ENCODE measurements at regions of chr4 and their contacts with region 1.

Region 1: DNA sequence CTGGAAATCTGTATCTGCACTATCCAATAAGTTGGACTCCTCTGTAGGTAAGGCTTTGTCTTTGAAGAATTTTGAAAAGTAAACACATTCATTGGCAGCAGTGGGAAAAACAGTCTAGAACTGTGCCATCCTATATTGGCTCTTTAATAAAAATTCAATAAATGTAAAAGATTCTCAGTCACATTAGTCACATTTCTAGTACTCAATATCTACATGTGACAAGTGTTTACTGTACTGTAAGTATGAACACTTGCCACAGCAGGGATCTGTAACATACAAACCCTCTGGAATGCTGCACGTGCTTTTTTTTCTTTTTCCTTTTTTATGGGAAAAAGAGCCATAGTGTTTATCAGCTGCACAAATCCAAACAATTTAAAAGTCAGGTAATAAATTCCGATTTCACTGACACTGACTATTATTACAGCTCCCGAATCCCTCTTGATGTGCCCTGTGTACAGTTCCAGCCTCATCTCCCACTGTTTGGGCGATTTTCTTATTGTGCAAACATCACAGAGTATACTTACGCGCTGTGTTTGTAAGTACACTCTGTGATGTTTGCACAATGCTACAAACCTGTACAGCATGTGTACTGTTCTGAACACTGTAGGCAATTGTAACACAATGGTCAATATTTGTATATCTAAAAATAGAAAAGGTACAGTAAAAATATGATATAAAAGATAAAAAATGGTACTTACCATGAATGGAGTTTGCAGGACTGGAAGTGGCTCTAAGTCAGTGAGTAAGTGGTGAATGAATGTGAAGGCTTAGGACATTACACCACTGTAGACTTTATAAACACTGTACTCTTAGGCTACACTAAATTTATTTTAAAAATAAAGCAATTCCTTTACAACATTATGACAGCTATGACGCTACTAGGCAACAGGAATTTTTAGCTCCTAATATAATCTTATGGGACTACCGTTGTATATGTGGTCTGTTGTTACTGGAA is 8.7 kb downstream of the PYURF start:
- DNase-seq: no peak
- H3K4me3 Mint-ChIP-seq: no peak overlapping the region
- H3K27ac Mint-ChIP-seq: no peak overlapping the region
- H3K4me1 Mint-ChIP-seq: no peaks in the 10 kb centered on the region
- H3K27me3 Mint-ChIP-seq: no peaks in the 10 kb centered on the region

Region 2: DNA sequence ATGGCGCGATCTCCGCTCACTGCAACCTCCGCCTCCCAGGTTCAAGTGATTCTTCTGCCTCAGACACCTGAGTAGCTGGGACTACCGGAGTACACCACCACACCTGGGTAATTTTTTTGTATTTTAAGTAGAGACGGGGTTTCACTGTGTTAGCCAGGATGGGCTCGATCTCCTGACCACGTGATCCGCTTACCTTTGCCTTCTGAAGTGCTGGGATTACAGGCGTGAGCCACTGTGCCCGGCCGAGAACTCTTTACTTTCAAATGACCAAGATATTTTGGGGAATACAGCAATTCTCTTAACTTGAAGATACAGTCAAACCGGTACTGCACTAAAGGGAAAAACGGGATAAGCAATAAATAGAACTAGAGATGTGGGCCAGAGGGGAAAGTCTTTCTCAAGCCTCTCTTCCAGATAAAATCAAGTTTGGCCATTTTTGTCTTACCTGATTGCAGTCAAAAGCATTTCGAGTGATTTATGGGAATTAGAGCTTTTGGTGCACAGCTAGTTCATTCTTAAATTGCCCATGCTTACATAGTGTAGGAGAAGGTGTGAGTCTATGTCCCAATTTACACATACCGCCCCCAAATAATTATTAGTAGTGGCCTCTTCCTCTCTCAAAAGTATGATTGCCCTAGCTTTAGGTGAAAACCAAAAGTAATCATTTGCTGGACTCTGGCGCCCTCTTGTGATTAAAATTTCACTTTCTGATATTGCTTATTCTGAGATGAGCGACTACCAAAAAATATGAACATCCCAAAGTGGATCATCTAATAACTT is 303.2 kb before region 1 on chr4:
- CTCF ChIA-PET with region 1: interaction called, 260 read pairs
- POLR2A ChIA-PET with region 1: no interaction called
- intact Hi-C with region 1: no loop called
- DNase-seq: peak; percentile 28
- H3K4me3 Mint-ChIP-seq: no peak overlapping the region
- H3K27ac Mint-ChIP-seq: no peak overlapping the region
- H3K4me1 Mint-ChIP-seq: no peaks in the 10 kb centered on the region
- H3K27me3 Mint-ChIP-seq: peaks cover 1% of the 10 kb centered on the region

Region 3: DNA sequence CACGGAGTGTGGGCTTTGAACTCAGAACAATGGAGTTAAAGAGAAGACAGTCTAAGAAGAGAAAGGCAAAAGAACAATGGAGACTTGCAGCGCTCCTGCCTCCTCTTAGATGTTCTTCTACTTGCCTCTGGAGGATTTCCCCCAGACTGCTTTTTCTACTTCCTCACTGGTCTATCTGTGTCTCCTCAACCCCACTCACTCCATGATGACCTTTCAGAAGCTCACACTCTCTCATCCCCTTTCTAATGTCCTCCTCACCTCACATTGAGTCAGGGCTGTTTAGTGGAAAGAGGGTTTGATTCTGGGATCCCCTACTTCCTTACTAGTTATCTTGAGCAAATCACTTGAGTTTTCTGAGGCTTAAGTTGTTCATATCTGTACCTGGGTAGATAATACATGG is 148.4 kb before region 1 on chr4:
- CTCF ChIA-PET with region 1: interaction called, 20 read pairs
- POLR2A ChIA-PET with region 1: no interaction called
- intact Hi-C with region 1: loop called (anchors 1 kb)
- DNase-seq: no peak
- H3K4me3 Mint-ChIP-seq: no peak overlapping the region
- H3K27ac Mint-ChIP-seq: no peak overlapping the region
- H3K4me1 Mint-ChIP-seq: no peaks in the 10 kb centered on the region
- H3K27me3 Mint-ChIP-seq: no peaks in the 10 kb centered on the region

Region 4: DNA sequence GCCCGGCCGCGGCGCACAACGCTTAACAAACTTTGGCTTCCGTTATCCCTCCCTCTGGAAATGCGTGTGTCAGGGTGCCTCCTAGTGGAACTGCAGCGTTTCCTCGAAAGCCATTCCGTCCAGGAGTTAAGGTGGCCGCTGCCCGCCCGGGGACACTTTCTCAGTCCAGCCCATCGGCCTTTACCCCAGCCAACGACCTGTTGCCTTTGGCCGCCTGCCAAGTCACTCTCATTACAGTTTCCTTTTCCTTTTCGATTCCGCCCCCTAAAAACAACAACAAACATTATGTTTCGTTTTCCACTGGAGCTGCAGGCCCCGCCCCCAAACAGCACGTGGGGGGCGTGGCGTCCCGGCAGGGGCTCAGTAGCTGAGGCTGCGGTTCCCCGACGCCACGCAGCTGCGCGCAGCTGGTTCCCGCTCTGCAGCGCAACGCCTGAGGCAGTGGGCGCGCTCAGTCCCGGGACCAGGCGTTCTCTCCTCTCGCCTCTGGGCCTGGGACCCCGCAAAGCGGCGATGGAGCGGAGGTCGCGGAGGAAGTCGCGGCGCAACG is 58.0 kb before region 1 on chr4 and contains the start of gene HERC5:
- CTCF ChIA-PET with region 1: interaction called, 4 read pairs
- POLR2A ChIA-PET with region 1: no interaction called
- intact Hi-C with region 1: loop called (anchors 2 kb)
- DNase-seq: peak; percentile 94
- H3K4me3 Mint-ChIP-seq: peak within 1 kb of the TSS; percentile 100
- H3K27ac Mint-ChIP-seq: peak within 1 kb of the TSS; percentile 97
- H3K4me1 Mint-ChIP-seq: peaks cover 12% of the 10 kb centered on the region
- H3K27me3 Mint-ChIP-seq: peaks cover 3% of the 10 kb centered on the region
- total RNA-seq, gene HERC5: 32.3 to 34.0 TPM

Region 5: GRCh38 chr4:89142691-89143669 is 628.1 kb after region 1 on chr4:
- CTCF ChIA-PET with region 1: no interaction called
- POLR2A ChIA-PET with region 1: no interaction called
- intact Hi-C with region 1: no loop called
- DNase-seq: no peak
- H3K4me3 Mint-ChIP-seq: no peak overlapping the region
- H3K27ac Mint-ChIP-seq: no peak overlapping the region
- H3K4me1 Mint-ChIP-seq: no peaks in the 10 kb centered on the region
- H3K27me3 Mint-ChIP-seq: no peaks in the 10 kb centered on the region

Measured in activated CD4-positive, alpha-beta memory T cell treated with anti-CD3 and anti-CD28 coated beads for 36 hours (primary cell).